ENCODE measurements at regions of chr15 and their contacts with region 1.

Region 1: GRCh38 chr15:90931737-90932659 is at the start of gene HDDC3:
- DNase-seq: peak; percentile 94 to 98
- ATAC-seq: peak; percentile 67 to 77
- H3K4me3 ChIP-seq: peak within 1 kb of the TSS; percentile 69
- H3K27ac ChIP-seq: peak within 1 kb of the TSS; percentile 84 to 93
- H3K4me1 ChIP-seq: peaks cover 35% of the 10 kb centered on the region
- CTCF ChIP-seq: peak; percentile 95
- EP300 ChIP-seq: no peak
- POLR2A ChIP-seq: peak; percentile 73
- RAD21 ChIP-seq: peak; percentile 26 to 39
- polyA plus RNA-seq, gene HDDC3: 29.8 and 31.9 TPM in 2 replicates

Region 2: DNA sequence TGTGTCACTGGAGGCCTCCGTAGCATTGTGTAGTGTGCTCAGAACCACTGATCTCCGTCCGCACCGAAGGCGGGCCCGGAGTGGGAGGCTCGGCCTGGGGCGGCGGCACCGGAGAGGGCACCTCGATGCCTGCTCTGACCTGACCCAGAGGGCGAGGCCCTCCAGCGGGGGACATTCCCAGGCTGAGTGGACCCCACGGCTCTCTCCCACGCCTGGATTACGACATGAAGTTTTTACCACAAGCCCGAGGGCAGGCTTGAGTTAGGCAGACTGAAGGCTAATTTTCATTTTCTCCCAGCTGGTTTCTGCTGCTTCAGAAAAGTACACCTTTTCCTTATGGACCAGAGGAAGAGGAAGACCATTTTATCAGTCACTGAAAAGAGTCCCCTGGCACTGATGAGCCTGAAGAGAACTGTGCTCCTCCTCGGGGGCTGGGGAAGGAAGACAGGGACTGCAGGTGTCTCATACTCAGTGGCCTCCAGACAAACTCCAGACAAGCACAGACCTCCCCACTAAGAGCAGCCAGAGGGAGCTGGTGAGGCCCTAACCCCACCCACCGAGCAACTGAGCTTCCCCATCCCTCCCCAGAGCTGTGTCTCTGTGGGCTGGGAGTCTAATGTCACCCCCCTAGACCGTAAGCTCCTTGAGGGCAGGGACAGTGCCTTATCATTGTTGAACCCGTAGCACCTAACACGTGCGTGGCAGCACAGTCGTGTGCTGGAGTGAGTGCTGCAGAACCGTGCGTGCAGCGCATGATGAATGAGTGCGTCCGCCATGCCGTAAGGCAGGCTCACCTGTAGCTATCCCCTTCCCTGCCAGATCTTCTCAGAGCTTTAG is 289.3 kb before region 1 on chr15:
- CTCF ChIA-PET with region 1: interaction called, 37 read pairs
- POLR2A ChIA-PET with region 1: no interaction called
- DNase-seq: no peak
- ATAC-seq: peak in 1 of 2 experiments; percentile 21; a peak in 1 of 6 replicates
- H3K4me3 ChIP-seq: no peak overlapping the region
- H3K27ac ChIP-seq: no peak overlapping the region
- H3K4me1 ChIP-seq: peaks cover 4% of the 10 kb centered on the region; the same call in 2 of the 3 replicates
- CTCF ChIP-seq: no peak
- EP300 ChIP-seq: no peak
- POLR2A ChIP-seq: no peak; the same call in 1 of the 2 replicates
- RAD21 ChIP-seq: no peak

Region 3: DNA sequence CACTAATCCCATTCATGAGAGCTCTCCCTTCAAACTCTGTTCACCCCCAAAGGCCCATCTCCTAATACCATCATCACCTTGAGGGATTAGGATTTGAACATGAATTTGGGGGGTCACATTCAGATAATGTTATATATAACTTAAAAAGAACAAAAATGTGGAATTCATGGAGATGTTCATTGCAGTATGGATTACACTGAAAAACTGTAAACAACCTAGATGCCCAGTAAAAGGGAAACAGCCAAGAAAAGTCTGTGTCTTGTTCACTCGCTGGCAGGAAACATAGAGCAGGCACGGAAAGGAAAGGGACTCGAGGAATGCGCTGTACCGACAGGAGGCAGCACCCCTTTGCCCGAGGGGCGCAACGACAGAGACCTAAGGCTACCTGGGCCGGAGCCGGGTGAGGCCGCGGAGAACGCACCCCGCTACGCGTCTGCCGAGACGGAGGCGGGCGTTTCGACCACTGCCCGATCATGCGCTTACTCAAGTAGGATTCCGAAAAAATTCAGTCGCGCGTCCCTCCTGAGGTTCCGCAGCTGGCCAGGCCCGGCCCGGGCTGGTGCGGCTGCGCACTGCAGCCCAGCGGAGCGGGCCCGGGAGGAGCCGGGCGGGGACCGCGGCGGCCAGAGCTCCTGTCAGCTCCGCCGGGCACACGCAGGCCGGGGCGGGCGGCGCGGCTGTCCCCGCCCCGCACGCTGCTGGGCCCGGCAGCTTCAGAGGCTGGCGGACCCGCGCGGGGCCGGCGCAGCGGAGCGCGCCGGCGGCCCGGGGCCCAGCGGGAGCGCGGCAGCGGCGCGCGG is 29.8 kb before region 1 on chr15:
- CTCF ChIA-PET with region 1: interaction called, 326 read pairs
- POLR2A ChIA-PET with region 1: interaction called, 14 read pairs
- DNase-seq: peak; percentile 88 to 99
- ATAC-seq: peak; percentile 88 to 94
- H3K4me3 ChIP-seq: peak overlapping the region; percentile 81
- H3K27ac ChIP-seq: peak overlapping the region; percentile 88
- H3K4me1 ChIP-seq: peaks cover 14% of the 10 kb centered on the region
- CTCF ChIP-seq: peak; percentile 90
- EP300 ChIP-seq: no peak
- POLR2A ChIP-seq: peak; percentile 91
- RAD21 ChIP-seq: peak; percentile 25 to 59; a peak in 4 of 5 replicates

Region 4: DNA sequence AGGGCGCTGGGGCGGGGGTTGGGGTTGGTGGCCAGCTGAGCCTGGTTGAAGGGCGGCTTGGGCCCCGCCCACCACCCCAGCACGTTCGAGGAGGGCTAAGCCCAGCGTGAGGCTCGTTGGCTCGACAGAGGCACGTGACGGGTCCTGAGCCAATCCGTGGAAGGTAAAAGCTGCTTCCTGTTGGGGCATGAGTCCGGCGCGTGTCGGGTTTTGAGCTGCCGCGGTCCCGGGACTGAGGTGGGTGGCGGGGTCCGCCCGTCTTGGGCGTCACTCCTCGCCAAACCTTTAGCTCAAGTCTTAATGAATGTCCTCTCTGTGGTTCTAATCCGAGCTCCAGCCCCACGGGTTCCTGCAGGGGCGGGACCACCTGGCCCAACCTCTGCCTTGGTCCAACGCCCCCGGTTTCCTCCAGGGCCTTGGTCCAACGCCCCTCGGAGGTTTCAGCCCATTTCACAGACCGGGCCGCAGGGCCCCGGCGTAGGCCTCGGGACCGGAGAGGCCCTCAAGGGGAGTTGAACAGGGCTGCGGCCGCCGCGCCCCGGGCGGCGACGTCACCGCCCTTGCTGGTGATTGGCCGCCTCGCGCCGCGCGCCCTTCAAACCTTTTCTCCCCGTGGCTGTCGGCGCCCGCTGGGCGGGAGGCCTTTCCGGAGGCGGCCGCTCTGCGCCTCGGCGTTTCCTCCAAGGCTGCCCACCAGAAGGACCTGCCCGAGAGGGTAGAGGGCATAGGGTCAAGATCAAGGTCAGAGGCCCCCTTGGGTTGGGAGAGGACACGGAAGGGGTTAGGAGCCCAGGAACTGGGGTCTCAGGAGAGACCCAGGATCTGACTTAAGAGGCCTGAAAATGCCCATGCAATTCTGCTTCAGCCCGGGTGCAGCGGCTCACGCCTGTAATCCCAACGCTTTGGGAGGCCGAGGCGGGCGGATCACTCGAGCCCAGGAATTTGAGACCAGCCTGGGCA is 23.0 kb after region 1 on chr15 and contains the start of gene RCCD1:
- CTCF ChIA-PET with region 1: interaction called, 536 read pairs
- POLR2A ChIA-PET with region 1: interaction called, 20 read pairs
- DNase-seq: peak; percentile 98 to 100
- ATAC-seq: peak; percentile 84 to 94
- H3K4me3 ChIP-seq: peak within 1 kb of the TSS; percentile 83
- H3K27ac ChIP-seq: peak within 1 kb of the TSS; percentile 95 to 98
- H3K4me1 ChIP-seq: peaks cover 19% of the 10 kb centered on the region
- CTCF ChIP-seq: no peak
- EP300 ChIP-seq: no peak
- POLR2A ChIP-seq: peak; percentile 88
- RAD21 ChIP-seq: no peak
- polyA plus RNA-seq, gene RCCD1: 22.8 and 25.3 TPM in 2 replicates

Region 5: GRCh38 chr15:90982135-90982534 is 50.1 kb after region 1 on chr15:
- CTCF ChIA-PET with region 1: interaction called, 82 read pairs
- POLR2A ChIA-PET with region 1: no interaction called
- DNase-seq: no peak
- ATAC-seq: no peak
- H3K4me3 ChIP-seq: no peak overlapping the region
- H3K27ac ChIP-seq: no peak overlapping the region
- H3K4me1 ChIP-seq: peaks cover 12% of the 10 kb centered on the region
- CTCF ChIP-seq: no peak
- EP300 ChIP-seq: no peak
- POLR2A ChIP-seq: no peak
- RAD21 ChIP-seq: no peak

Region 6: DNA sequence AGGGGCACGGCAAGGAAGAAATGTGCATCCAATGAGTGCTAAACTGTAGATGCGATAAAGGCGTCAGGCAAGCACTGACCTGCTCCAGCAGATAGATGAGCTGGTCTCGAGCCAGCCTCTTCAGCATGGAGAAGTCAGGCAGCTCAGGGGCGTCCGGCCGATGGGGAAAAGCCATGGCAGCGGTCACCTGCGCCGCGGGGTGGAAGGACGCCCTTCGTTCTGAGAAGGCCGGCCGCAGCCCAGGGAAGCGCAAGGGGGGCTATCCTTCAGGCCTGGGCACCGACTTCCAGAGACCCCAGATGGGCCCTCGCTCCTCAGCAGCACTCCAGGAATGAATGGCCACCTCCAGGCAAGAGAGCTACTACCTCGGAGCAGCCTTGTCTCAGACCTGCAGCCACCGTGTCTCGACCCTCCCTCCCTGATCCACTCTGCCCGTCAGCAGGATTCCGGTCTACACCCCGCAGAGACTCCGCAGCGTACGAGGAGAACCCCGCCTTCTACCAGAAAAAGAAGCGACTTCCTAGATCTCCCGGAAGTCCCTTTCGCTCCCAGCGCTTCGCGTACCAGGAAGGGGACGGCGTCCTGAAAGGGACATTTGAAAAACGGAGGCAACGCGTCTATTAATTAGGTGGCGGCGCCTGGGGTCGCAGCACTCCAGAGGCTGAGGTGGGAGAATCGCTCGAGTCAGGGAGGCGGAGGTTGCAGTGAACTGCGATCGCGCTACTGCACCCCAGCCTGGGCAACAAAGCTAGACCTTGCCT is 90.3 kb after region 1 on chr15 and contains the start of gene VPS33B:
- CTCF ChIA-PET with region 1: interaction called, 11 read pairs
- POLR2A ChIA-PET with region 1: no interaction called
- DNase-seq: peak; percentile 86 to 91
- ATAC-seq: peak; percentile 94 to 96
- H3K4me3 ChIP-seq: peak within 1 kb of the TSS; percentile 89
- H3K27ac ChIP-seq: peak within 1 kb of the TSS; percentile 88 to 91
- H3K4me1 ChIP-seq: peaks cover 16% of the 10 kb centered on the region
- CTCF ChIP-seq: no peak
- EP300 ChIP-seq: no peak
- POLR2A ChIP-seq: peak; percentile 84
- RAD21 ChIP-seq: no peak
- polyA plus RNA-seq, gene VPS33B: 17.9 and 25.0 TPM in 2 replicates

Region 7: DNA sequence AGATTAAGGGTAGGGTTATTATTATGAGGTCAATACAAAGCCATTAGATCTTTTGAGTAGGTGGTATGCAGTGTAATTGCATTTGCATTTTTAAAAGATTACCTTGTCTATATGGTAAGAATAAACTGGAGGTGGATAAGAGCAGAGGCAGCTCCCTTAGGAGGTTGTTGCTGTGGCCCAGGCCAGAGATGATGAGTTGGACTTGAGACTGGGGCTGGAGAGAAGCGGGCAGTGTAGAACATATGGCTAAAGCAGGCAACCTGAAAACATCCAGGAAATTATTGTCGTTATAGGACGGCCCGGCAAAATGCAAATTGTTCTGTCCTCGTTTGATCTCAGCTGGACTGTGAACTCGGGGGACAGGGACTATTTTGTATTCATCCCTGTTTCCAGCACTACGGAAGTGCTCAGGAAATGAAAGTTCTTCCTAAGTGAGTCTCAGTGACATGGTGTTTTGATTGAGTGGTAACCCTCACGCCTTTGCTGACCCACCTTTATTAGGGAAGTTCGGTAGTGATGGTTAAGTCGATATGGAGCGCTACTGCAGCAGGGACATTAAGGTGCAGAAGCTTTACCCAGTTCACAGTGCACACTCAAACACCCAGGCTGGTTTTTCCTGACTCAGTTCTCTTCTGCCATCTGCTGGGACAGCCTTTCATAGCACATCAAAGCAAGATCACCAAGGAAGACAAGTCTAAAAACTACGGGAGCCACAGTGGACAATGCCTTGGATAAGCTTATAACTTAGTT is 117.6 kb after region 1 on chr15:
- CTCF ChIA-PET with region 1: interaction called, 40 read pairs
- POLR2A ChIA-PET with region 1: interaction called, 3 read pairs
- DNase-seq: peak; percentile 63 to 81
- ATAC-seq: peak; percentile 95 to 96
- H3K4me3 ChIP-seq: no peak overlapping the region
- H3K27ac ChIP-seq: no peak overlapping the region
- H3K4me1 ChIP-seq: no peaks in the 10 kb centered on the region
- CTCF ChIP-seq: peak; percentile 83
- EP300 ChIP-seq: no peak
- POLR2A ChIP-seq: no peak
- RAD21 ChIP-seq: peak; percentile 83 to 86